ENCODE measurements at regions of chr12 and their contacts with region 1.

Region 1: DNA sequence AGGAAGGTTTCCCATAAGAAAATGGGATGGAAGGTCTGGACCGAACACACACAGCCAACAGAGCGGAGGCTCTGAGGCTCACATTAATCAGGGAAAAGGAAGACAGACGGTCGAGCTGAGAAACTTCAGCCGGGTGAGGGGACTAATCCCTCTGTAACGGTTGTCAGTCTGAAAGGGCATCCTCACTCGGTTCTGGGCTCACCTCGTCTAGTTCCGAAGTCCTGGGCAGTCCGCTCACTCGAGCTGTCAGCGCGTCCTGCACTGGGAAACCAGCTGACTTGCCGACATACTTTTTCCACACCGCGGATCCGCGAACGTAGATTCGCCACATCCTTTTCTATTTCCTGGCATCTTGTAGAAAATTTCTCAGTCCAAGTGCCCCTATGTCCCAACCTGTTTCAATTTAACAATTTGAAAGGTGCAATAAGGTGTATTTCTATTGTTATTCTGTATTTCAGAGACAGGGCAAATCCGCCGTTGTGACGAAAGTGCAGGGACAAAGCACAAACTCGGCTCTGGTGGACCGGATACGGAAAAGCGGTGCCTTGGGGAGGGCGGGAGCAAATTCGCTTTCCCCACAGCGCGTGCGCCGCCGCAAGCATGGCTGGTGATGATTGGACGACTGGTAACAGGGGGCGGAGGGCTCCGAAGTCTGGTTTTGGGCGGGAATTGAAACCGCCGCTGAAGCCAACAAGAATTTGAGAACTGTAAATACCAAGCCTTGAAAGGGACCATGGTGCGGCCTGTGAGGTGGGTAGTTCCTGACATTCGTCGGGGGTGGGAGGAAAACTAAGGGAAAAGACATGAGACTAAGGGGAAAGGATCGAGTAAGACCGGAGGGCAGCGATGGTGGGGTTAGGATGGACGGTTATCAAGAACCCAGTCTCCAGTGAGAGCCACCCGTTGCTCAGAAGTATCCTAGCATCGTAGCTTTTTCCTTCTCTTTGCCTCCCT is at the start of gene RAD51AP1:
- DNase-seq: peak; percentile 97
- H3K4me3 Mint-ChIP-seq: peak within 1 kb of the TSS; percentile 94
- H3K27ac Mint-ChIP-seq: peak within 1 kb of the TSS; percentile 98
- H3K4me1 Mint-ChIP-seq: peaks cover 25% of the 10 kb centered on the region
- H3K27me3 Mint-ChIP-seq: no peaks in the 10 kb centered on the region
- total RNA-seq, gene RAD51AP1: 44.6 to 49.7 TPM

Region 2: DNA sequence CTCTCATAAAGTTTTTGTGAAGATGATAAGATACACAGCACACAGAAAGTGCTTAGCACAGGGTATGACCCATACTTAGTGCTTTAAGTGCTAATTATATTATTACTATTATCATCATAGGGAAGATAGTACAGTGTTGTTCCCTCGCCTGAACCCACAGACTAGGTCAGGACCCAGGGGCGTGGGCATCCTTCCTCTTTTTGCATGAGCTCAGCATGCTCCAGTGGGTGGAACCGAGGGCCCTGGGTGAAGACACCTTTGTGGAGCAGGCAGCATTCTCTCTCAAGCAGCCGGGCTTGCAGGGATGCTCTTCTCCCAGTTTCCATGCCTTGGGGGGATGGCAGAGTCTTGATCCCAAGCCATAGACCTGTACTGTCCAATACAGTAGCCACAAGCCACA is 820.4 kb before region 1 on chr12:
- CTCF ChIA-PET with region 1: no interaction called
- POLR2A ChIA-PET with region 1: no interaction called
- intact Hi-C with region 1: no loop called
- DNase-seq: no peak
- H3K4me3 Mint-ChIP-seq: no peak overlapping the region
- H3K27ac Mint-ChIP-seq: no peak overlapping the region
- H3K4me1 Mint-ChIP-seq: peaks cover 5% of the 10 kb centered on the region
- H3K27me3 Mint-ChIP-seq: no peaks in the 10 kb centered on the region

Region 3: DNA sequence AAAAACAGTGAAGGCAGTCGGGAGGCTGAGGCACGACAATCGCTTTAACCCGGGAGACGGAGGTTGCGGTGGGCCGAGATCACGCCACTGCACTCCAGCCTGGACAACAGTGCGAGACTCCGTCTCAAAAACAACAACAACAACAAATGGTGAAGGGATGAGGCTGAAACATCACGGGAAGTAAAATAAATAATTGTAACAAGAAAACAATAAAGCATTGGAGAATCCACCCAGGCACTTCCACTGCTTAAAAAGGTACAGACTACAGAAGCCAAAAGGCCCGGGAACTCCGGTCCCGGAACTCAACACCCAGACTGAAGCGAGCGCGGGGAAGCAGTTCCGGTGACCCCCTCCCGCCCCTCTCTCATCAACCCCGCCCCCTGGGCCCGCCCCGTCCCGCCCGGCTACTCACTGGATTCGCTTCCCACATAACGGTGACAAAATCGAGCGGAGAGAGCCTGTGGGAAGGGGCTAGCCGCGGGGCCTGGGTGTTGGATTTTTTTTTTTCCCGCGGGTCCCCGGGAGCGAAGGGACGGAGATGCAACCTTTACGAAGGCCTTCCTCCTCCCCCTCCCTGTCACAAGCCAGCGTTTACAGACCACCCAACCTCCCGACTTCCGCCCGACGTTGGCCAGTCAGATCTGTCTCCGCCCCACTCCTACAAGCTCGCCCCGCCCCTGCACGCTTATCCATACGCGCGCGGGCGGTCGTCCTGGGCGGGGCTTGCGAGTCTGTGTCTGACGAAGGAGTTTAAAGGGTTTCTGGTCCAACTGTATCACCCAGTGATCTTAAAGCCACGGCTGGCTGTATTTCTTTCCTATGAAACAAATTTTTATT is 665.5 kb before region 1 on chr12 and contains the start of gene PARP11:
- CTCF ChIA-PET with region 1: no interaction called
- POLR2A ChIA-PET with region 1: no interaction called
- intact Hi-C with region 1: loop called (anchors 1 kb)
- DNase-seq: peak; percentile 98
- H3K4me3 Mint-ChIP-seq: peak within 1 kb of the TSS; percentile 91
- H3K27ac Mint-ChIP-seq: peak within 1 kb of the TSS; percentile 97
- H3K4me1 Mint-ChIP-seq: peaks cover 46% of the 10 kb centered on the region
- H3K27me3 Mint-ChIP-seq: no peaks in the 10 kb centered on the region
- total RNA-seq, gene PARP11: 16.6 to 17.8 TPM

Region 4: DNA sequence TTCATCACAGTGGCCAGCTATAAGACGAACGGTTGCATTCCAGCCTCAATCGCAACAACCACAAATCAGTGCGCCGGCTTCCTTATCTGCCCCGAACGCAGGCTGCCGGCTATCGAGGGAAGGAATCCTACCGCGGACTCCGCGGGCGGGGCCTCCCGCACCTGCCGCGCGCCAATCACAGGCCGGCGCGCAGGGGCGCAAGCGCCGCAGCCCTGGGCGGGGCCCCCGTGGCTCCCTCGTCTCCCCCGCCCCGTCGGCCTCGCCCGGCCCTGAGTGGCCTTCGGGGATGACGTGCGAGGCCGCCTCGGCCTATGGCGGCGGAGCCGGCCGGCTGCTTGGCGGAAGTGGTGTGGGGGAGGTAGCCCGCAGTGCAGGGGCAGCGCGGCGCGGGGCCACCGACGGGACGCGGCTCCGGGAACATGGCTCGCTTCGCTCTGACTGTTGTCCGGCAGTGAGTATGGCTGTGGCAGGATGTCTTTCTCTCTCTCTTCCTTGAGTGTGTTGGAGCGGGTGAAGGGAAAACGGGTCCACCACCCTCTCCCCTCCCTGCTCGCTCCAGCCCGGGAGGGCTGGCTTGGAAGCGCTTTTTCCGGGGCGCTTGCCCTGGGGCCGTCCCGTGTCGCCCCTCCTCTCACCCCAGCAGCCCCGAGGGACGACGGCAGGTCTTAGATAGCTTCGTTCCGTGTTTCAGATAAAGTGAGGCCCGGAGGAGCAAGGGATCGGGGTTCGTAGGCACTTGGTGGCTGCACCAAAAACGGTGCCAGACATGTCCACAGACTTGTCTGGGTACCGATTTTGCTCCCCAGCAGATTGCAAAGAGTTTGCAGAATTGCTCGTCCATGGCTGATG is 217.4 kb before region 1 on chr12 and contains the start of gene TIGAR:
- CTCF ChIA-PET with region 1: no interaction called
- POLR2A ChIA-PET with region 1: no interaction called
- intact Hi-C with region 1: loop called (anchors 10 kb)
- DNase-seq: peak; percentile 94
- H3K4me3 Mint-ChIP-seq: peak within 1 kb of the TSS; percentile 94
- H3K27ac Mint-ChIP-seq: peak within 1 kb of the TSS; percentile 87
- H3K4me1 Mint-ChIP-seq: peaks cover 34% of the 10 kb centered on the region
- H3K27me3 Mint-ChIP-seq: no peaks in the 10 kb centered on the region
- total RNA-seq, gene TIGAR: 12.0 to 13.6 TPM

Region 5: GRCh38 chr12:4425897-4426296 is 112.6 kb before region 1 on chr12:
- CTCF ChIA-PET with region 1: no interaction called
- POLR2A ChIA-PET with region 1: no interaction called
- intact Hi-C with region 1: no loop called
- DNase-seq: no peak
- H3K4me3 Mint-ChIP-seq: no peak overlapping the region
- H3K27ac Mint-ChIP-seq: no peak overlapping the region
- H3K4me1 Mint-ChIP-seq: no peaks in the 10 kb centered on the region
- H3K27me3 Mint-ChIP-seq: no peaks in the 10 kb centered on the region

Region 6: GRCh38 chr12:4496145-4496838 is 42.2 kb before region 1 on chr12:
- CTCF ChIA-PET with region 1: interaction called, 3 read pairs
- POLR2A ChIA-PET with region 1: no interaction called
- intact Hi-C with region 1: loop called (anchors 1 kb)
- DNase-seq: no peak
- H3K4me3 Mint-ChIP-seq: no peak overlapping the region
- H3K27ac Mint-ChIP-seq: no peak overlapping the region
- H3K4me1 Mint-ChIP-seq: peaks cover 16% of the 10 kb centered on the region
- H3K27me3 Mint-ChIP-seq: no peaks in the 10 kb centered on the region

Region 7: DNA sequence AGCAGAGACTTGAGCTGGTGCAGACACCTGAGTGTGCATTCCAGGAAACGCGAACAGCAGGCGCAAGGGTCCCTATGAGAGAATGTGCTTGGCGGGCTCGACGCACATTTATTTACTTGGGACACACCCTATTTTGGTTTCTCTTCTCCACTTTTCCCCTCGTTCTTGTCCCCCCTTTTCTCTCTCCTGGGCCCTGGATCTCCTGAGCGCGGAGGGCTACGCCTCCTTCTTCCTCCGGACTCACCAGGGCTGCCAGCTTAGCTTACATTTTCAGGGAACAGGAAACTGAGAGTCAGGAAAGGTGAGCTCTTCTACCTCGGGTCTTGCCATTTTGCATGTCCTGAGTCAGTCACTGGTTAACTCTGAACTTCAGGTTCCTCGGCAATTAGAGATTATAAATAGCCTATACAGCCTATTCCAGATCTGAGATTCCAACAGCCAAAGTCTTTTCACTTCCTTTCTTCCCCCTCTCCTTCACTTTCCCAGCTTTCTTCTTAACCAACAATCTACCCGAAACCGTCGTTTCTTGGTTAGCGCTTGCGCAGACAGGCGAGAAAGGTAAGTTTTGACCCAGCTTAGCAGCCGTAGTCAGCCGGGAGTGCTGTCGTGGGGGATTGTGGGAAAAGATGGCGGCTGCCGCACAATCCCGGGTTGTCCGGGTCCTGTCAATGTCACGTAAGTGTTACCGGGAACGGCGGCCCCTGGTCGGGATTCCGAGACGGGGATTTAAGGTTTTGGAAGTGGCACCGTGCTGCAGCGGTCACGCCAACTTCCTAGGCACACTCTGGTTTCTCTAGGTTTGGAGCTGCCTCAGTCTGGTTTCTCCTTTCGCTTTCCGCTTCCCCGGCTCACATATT is 110.2 kb after region 1 on chr12 and contains the starts of genes AKAP3 and NDUFA9:
- CTCF ChIA-PET with region 1: no interaction called
- POLR2A ChIA-PET with region 1: interaction called, 5 read pairs
- intact Hi-C with region 1: loop called (anchors 1 kb)
- DNase-seq: peak; percentile 89
- H3K4me3 Mint-ChIP-seq: peak within 1 kb of the TSS; percentile 93
- H3K27ac Mint-ChIP-seq: peak within 1 kb of the TSS; percentile 90
- H3K4me1 Mint-ChIP-seq: peaks cover 41% of the 10 kb centered on the region
- H3K27me3 Mint-ChIP-seq: no peaks in the 10 kb centered on the region
- total RNA-seq, gene AKAP3: 2.9 to 3.1 TPM
- total RNA-seq, gene NDUFA9: 119 to 122 TPM

Region 8: GRCh38 chr12:5022465-5023061 is 484.1 kb after region 1 on chr12:
- CTCF ChIA-PET with region 1: no interaction called
- POLR2A ChIA-PET with region 1: no interaction called
- intact Hi-C with region 1: no loop called
- DNase-seq: peak; percentile 47
- H3K4me3 Mint-ChIP-seq: no peak overlapping the region
- H3K27ac Mint-ChIP-seq: no peak overlapping the region
- H3K4me1 Mint-ChIP-seq: no peaks in the 10 kb centered on the region
- H3K27me3 Mint-ChIP-seq: peaks cover 17% of the 10 kb centered on the region

Measured in activated CD4-positive, alpha-beta memory T cell treated with anti-CD3 and anti-CD28 coated beads for 36 hours (primary cell).